GM10248 (cell line): ENCODE measurements at regions of chr1 and their contacts with region 1.

Region 1: GRCh38 chr1:183522104-183522503 is 49.8 kb downstream of the SMG7 start:
- DNase-seq: no peak
- CTCF ChIP-seq: no peak

Region 2: GRCh38 chr1:183480971-183481441 is 41.1 kb before region 1 on chr1:
- CTCF ChIA-PET with region 1: no interaction called
- POLR2A ChIA-PET with region 1: no interaction called
- DNase-seq: no peak
- CTCF ChIP-seq: no peak

Region 3: GRCh38 chr1:183537405-183537804 is 15.3 kb after region 1 on chr1:
- CTCF ChIA-PET with region 1: interaction called, 11 read pairs
- POLR2A ChIA-PET with region 1: no interaction called
- DNase-seq: no peak
- CTCF ChIP-seq: no peak